Mammary epithelial cell (primary cell): ENCODE measurements at regions of chr13 and their contacts with region 1.

Region 1: DNA sequence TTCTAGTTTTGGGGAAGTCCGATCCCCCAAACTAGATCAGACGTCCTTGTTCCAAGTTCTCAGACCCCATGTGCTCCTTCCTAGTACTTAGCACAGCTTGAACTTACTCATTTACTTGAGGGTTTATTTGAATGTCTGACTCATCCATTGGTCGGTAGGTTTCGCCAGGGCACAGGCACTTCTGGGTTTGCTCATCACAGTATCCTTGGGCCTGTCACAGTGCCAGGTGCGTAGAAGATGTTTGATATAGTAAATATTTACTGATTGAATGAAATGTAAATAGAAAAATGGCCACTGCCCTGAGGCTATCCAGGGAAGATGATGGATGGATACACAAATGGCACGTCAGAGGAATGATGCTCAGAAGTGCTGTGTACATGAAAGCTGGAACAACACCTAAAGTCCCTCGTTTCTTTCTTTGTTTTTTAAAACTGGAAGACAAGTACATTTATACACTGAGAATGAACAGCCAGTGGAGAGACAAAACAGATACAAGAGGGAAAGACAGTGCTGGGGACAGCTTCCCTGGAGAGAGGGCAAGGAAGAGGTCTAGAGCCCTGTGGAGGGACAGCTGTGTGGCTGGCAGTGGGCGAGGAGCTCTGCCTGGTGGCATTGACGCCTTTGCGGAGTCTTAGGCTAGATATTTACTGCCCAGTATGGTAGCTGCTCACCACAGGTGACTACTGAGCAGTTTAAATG is 31.2 kb upstream of the KL start:
- DNase-seq: no peak
- H3K4me3 ChIP-seq: no peak overlapping the region
- H3K27ac ChIP-seq: no peak overlapping the region
- H3K4me1 ChIP-seq: no peaks in the 10 kb centered on the region
- H3K27me3 ChIP-seq: no peaks in the 10 kb centered on the region
- CTCF ChIP-seq: no peak

Region 2: DNA sequence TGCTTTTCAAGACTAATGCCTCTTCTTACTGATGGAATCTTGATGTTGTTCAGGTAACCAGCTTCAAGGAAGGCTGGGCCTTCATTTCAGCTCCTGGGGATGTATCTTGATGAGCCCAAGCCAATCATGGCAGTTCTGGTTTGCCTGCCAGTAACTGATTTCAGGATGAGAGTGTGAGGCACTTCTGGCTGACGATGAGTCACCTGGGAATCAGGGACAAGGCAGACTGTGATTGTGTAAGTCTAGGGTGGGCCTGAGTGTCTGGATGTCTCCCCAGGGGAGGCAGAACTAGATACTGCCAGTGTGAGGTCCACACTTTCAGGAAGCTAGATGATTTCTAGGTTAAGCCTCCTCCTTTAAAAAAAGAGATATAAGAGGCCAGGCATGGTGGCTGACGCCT is 46.1 kb before region 1 on chr13:
- CTCF ChIA-PET with region 1: no interaction called
- dilution Hi-C with region 1: loop called (anchors 5 kb)
- in situ Hi-C with region 1: no loop called
- intact Hi-C with region 1: no loop called
- DNase-seq: peak; percentile 50
- H3K4me3 ChIP-seq: no peak overlapping the region
- H3K27ac ChIP-seq: no peak overlapping the region
- H3K4me1 ChIP-seq: no peaks in the 10 kb centered on the region
- H3K27me3 ChIP-seq: no peaks in the 10 kb centered on the region
- CTCF ChIP-seq: no peak

Region 3: DNA sequence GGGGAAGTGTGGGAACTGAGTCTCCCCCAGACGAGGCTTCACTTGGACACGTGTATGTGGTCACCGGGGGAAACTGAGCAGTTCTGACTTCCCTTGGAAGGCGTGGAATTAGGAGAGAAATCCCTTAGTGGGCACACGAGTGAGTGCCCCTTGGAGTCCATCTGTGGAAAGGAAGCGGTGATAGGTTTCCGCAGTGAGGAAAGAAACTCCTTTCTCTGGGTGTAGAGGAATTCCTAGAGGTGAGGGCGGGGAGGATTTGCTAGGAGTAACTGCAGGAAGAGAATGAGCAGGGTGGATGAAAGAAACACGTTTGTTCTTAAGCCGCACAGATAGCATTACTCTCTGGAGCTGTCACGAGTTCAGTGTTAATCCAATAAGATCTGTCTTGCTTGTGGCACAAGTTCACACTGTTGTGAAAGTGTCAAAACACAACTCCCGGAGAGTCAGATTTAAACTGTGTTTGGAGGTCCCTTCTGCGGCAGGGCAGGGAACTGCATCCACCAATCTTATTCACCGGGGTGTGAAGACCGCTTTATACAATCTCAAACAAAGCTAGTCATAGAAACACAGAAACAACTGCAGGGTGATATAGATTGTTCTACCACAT is 32.4 kb after region 1 on chr13:
- CTCF ChIA-PET with region 1: no interaction called
- dilution Hi-C with region 1: no loop called
- in situ Hi-C with region 1: no loop called
- intact Hi-C with region 1: no loop called
- DNase-seq: peak; percentile 31
- H3K4me3 ChIP-seq: no peak overlapping the region
- H3K27ac ChIP-seq: no peak overlapping the region
- H3K4me1 ChIP-seq: peaks cover 10% of the 10 kb centered on the region
- H3K27me3 ChIP-seq: peaks cover 32% of the 10 kb centered on the region
- CTCF ChIP-seq: peak; percentile 38 to 39

Region 4: DNA sequence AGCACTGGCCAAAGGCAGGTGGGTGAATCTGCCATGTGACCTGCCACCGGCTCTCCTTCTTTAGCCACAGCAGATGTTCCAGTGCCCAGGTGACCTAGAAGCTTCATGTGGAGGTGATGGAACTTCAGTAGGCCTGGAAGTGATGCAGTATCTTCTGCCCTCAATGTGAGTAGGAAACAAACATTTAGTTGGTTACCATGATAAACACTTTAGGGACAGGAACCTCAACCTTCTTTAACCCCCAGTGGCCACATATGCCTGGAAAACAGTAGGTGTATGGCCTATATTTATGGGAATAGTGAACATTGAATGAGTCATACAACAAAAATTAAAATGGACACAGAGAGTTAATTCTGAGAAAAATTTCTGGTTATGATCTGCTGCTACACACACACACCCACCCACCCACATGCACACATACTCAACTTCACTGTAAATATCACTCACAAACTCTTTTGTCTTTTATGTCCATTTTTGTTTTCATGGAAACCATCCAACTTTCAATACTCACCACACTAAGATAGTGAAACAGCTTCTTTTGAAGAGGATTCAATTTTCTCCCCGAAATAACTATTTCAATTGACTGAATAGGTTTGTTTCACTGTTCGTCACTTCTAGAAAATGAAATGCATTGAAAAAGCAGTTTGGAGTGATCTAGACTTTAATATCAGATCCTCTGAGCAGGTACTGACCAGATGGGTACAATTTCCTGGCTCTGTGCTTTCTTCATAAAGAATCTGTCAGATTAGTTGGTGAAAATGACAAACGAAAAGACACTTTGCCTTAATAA is 203.3 kb after region 1 on chr13:
- CTCF ChIA-PET with region 1: no interaction called
- dilution Hi-C with region 1: no loop called
- in situ Hi-C with region 1: no loop called
- intact Hi-C with region 1: no loop called
- DNase-seq: no peak
- H3K4me3 ChIP-seq: no peak overlapping the region
- H3K27ac ChIP-seq: peak overlapping the region; percentile 15
- H3K4me1 ChIP-seq: peaks cover 13% of the 10 kb centered on the region
- H3K27me3 ChIP-seq: no peaks in the 10 kb centered on the region
- CTCF ChIP-seq: no peak

Region 5: GRCh38 chr13:33307843-33308242 is 322.8 kb after region 1 on chr13:
- CTCF ChIA-PET with region 1: no interaction called
- dilution Hi-C with region 1: no loop called
- in situ Hi-C with region 1: no loop called
- intact Hi-C with region 1: no loop called
- DNase-seq: no peak
- H3K4me3 ChIP-seq: no peak overlapping the region
- H3K27ac ChIP-seq: no peak overlapping the region
- H3K4me1 ChIP-seq: no peaks in the 10 kb centered on the region
- H3K27me3 ChIP-seq: no peaks in the 10 kb centered on the region
- CTCF ChIP-seq: no peak